WTC11 (cell line): ENCODE measurements at regions of chr3 and their contacts with region 1.

Region 1: GRCh38 chr3:58432905-58433304 is 727 bp downstream of the PDHB start:
- DNase-seq: no peak
- ATAC-seq: no peak
- H3K4me3 Mint-ChIP-seq: peak overlapping the region; percentile 96
- H3K27ac Mint-ChIP-seq: peak overlapping the region; percentile 93
- H3K4me1 Mint-ChIP-seq: peaks cover 50% of the 10 kb centered on the region
- H3K27me3 Mint-ChIP-seq: no peaks in the 10 kb centered on the region
- CTCF ChIP-seq: no peak

Region 2: DNA sequence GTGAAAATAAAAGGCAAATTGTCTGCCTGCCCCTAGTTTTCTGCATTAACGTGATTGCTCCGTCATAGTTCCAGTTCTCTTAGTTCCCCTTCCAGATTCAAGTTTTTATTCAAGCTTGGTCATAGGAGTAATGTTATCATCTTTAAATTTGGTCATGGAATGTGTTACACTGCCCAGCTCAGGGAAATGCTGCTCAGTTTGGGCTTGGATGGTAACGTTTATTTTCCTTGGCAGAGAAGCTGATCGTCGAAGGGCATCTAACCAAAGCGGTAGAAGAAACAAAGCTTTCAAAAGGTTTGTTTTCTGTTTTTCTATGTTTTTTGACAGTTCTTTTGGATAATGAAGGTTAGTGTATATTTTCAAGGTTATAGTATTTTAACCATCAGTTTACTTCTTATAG is 543.1 kb before region 1 on chr3:
- CTCF ChIA-PET with region 1: no interaction called
- POLR2A ChIA-PET with region 1: no interaction called
- DNase-seq: no peak
- ATAC-seq: no peak
- H3K4me3 Mint-ChIP-seq: no peak overlapping the region
- H3K27ac Mint-ChIP-seq: no peak overlapping the region
- H3K4me1 Mint-ChIP-seq: no peaks in the 10 kb centered on the region
- H3K27me3 Mint-ChIP-seq: no peaks in the 10 kb centered on the region
- CTCF ChIP-seq: no peak

Region 3: GRCh38 chr3:58299839-58300516 is 132.9 kb before region 1 on chr3:
- CTCF ChIA-PET with region 1: no interaction called
- POLR2A ChIA-PET with region 1: no interaction called
- DNase-seq: no peak
- ATAC-seq: peak; percentile 65
- H3K4me3 Mint-ChIP-seq: no peak overlapping the region
- H3K27ac Mint-ChIP-seq: no peak overlapping the region
- H3K4me1 Mint-ChIP-seq: peaks cover 9% of the 10 kb centered on the region
- H3K27me3 Mint-ChIP-seq: peaks cover 14% of the 10 kb centered on the region
- CTCF ChIP-seq: peak; percentile 48; the same call in 1 of the 2 replicates

Region 4: DNA sequence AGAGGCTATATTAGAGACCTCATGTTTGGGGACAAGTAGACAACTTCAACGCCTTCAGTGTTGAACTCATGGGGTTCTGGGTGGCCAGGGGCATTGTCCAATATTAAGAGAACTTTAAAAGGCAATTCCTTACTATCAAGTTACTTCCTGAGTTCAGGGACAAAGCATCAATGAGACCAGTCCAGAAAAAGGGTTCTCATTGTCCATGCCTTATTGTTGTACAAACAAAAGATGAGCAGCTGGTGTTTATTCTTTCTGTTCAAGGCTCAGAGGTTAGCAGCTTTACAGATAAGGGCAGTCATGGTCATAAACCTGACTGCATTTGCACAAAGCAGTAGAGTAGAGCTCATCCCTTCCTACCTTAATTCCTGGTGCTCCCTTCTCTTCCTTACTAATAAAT is 19.3 kb after region 1 on chr3:
- CTCF ChIA-PET with region 1: no interaction called
- POLR2A ChIA-PET with region 1: interaction called, 10 read pairs
- DNase-seq: no peak
- ATAC-seq: no peak
- H3K4me3 Mint-ChIP-seq: no peak overlapping the region
- H3K27ac Mint-ChIP-seq: no peak overlapping the region
- H3K4me1 Mint-ChIP-seq: 0 out of 2 replicates have a peak, but pooled peaks cover 3% of the 10 kb centered on the region
- H3K27me3 Mint-ChIP-seq: peaks cover 2% of the 10 kb centered on the region; the same call in 1 of the 2 replicates
- CTCF ChIP-seq: no peak